ENCODE measurements at regions of chr7 and their contacts with region 1.

Region 1: GRCh38 chr7:116671681-116672595 is at the start of gene MET:
- DNase-seq: peak; percentile 82 to 98
- H3K4me3 ChIP-seq: peak within 1 kb of the TSS; percentile 98
- H3K27ac ChIP-seq: peak within 1 kb of the TSS; percentile 90
- H3K4me1 ChIP-seq: peaks cover 40% of the 10 kb centered on the region
- H3K27me3 ChIP-seq: no peaks in the 10 kb centered on the region
- CTCF ChIP-seq: peak; percentile 76
- total RNA-seq, gene MET: 237 and 287 TPM in 2 replicates

Region 2: DNA sequence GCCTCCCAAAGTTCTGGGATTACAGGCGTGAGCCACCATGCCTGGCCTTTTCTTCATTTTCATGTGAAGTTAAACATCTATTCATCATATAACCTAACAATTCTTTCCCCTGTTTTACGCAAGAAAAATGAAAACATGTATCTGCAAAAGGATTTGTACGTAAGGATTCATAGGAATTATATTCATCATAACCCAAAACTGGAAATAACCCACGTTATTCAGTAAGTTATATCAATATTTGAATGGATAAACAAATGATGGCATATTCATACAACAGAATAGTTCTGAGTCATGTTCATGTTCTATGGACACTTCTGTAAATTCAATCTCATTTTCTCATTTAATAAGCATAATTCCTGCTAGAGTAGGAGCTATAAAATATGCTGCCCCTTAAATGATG is 207.6 kb before region 1 on chr7:
- CTCF ChIA-PET with region 1: no interaction called
- POLR2A ChIA-PET with region 1: no interaction called
- intact Hi-C with region 1: no loop called
- DNase-seq: no peak
- H3K4me3 ChIP-seq: no peak overlapping the region
- H3K27ac ChIP-seq: no peak overlapping the region
- H3K4me1 ChIP-seq: peaks cover 27% of the 10 kb centered on the region
- H3K27me3 ChIP-seq: no peaks in the 10 kb centered on the region
- CTCF ChIP-seq: no peak

Region 3: GRCh38 chr7:116525913-116526861 is 145.8 kb before region 1 on chr7:
- CTCF ChIA-PET with region 1: no interaction called
- POLR2A ChIA-PET with region 1: interaction called, 4 read pairs
- intact Hi-C with region 1: loop called (anchors 2 kb)
- DNase-seq: peak; percentile 63 to 90
- H3K4me3 ChIP-seq: peak overlapping the region; percentile 97
- H3K27ac ChIP-seq: peak overlapping the region; percentile 92
- H3K4me1 ChIP-seq: peaks cover 64% of the 10 kb centered on the region
- H3K27me3 ChIP-seq: no peaks in the 10 kb centered on the region
- CTCF ChIP-seq: peak; percentile 56

Region 4: GRCh38 chr7:116706668-116707126 is 34.8 kb after region 1 on chr7:
- CTCF ChIA-PET with region 1: interaction called, 3 read pairs
- POLR2A ChIA-PET with region 1: interaction called, 5 read pairs
- intact Hi-C with region 1: loop called (anchors 1 kb)
- DNase-seq: peak; percentile 71 to 80
- H3K4me3 ChIP-seq: peak overlapping the region; percentile 43; the same call in 1 of the 2 replicates
- H3K27ac ChIP-seq: peak overlapping the region; percentile 82
- H3K4me1 ChIP-seq: peaks cover 67% of the 10 kb centered on the region
- H3K27me3 ChIP-seq: no peaks in the 10 kb centered on the region
- CTCF ChIP-seq: no peak

Region 5: DNA sequence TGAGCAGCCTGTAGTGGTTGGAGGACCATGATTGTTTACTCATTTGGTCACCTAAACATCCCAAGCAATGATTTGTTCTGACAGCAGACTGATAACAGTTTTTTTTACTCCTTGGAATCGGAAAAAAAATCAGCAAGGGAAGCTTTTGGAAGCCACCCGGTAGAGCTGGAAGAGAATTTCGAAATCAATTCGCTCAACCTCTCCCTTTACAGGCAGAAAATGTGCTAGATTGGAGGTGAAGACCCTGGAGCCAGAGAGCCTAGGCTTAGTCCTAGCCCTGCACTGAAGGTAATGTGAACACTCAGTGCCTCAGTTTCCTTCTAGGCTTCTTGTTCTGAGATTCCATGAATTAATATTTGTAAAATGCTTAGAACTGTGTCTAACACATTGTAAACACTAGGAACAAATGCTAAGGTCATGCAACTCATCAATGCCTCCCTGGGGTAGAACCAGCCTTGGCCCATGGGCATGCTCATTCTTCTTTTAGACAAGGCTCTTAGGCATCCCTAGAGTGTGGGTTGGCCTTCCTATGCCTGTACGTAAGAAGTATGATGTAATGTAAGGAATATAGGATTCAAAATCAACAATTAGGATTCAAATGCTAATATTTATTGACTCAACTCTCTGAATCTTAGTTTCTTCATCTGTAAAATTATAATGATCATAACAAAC is 52.8 kb after region 1 on chr7:
- CTCF ChIA-PET with region 1: no interaction called
- POLR2A ChIA-PET with region 1: no interaction called
- intact Hi-C with region 1: no loop called
- DNase-seq: no peak
- H3K4me3 ChIP-seq: no peak overlapping the region
- H3K27ac ChIP-seq: no peak overlapping the region
- H3K4me1 ChIP-seq: peaks cover 17% of the 10 kb centered on the region
- H3K27me3 ChIP-seq: no peaks in the 10 kb centered on the region
- CTCF ChIP-seq: no peak

Region 6: DNA sequence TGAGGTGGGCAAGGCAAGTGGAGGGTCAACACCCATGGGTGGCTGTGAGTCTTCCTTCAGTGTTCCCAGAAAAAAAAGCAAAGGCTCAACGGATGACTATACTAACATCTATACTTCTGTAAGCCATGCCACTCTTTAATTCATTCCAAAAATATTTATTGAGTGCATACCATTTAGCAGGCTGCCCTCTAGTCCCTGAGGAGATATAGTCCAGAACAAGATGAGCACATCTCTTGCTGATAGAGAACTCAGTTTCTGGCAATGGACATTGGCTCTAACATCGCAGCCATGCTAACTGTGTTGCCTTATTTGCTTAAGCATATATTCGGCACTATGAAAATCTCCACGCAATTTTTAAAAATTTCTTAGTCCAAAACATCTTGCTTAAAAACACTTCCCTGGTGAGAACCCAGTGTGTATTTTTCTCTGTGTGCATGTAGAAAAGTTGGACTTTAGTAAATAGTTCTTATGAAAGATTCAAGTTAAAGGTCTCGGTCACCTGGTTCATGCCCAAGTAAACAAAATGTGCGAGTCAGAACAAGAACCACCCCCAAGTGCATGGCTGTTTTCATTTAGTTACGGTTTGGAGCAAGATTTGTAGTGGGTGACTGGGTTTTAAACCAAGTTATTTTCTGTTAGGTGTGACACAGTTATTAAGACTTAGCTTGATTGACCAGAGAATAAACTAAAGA is 69.8 kb after region 1 on chr7:
- CTCF ChIA-PET with region 1: interaction called, 10 read pairs
- POLR2A ChIA-PET with region 1: no interaction called
- intact Hi-C with region 1: no loop called
- DNase-seq: no peak
- H3K4me3 ChIP-seq: no peak overlapping the region
- H3K27ac ChIP-seq: no peak overlapping the region
- H3K4me1 ChIP-seq: no peaks in the 10 kb centered on the region
- H3K27me3 ChIP-seq: no peaks in the 10 kb centered on the region
- CTCF ChIP-seq: no peak

Region 7: DNA sequence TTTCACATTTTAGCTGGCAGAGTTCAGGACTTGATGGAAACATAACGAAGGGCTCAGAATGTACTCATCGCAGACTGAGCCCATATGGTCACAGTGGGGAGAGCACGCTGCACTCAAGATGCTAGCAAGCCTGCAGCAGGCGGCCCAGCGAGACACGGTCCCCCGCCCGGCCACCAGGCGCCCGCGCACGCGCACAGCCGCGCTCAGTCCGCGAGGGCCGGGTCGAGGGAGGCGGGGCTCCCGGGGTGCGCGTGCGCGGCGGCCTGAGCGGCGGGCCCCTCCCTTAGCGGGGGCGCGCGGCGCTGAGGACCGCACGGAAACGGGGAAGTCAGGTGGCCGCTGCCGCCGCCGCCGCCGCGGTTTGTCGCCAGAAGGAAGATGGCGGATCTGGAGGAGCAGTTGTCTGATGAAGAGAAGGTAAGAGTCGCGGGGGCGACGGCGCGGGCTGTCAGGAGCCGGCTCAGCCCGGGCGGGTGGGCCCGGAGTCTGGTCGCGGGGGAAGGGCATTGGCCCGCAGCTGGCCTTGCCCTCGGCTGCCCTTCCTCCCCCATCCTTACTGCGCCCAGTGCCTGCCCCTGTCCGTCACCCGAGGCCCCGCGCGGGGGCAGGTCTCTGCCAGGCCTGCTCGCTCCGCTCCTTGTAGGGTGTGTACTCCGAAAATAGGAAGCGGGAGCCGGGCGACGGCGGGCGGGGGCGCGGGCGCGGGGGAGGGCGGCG is 190.5 kb after region 1 on chr7 and contains the start of gene CAPZA2:
- CTCF ChIA-PET with region 1: no interaction called
- POLR2A ChIA-PET with region 1: no interaction called
- intact Hi-C with region 1: loop called (anchors 2 kb)
- DNase-seq: peak; percentile 74 to 97
- H3K4me3 ChIP-seq: peak within 1 kb of the TSS; percentile 99
- H3K27ac ChIP-seq: peak within 1 kb of the TSS; percentile 53
- H3K4me1 ChIP-seq: peaks cover 37% of the 10 kb centered on the region
- H3K27me3 ChIP-seq: no peaks in the 10 kb centered on the region
- CTCF ChIP-seq: no peak
- total RNA-seq, gene CAPZA2: 171 and 203 TPM in 2 replicates

Region 8: DNA sequence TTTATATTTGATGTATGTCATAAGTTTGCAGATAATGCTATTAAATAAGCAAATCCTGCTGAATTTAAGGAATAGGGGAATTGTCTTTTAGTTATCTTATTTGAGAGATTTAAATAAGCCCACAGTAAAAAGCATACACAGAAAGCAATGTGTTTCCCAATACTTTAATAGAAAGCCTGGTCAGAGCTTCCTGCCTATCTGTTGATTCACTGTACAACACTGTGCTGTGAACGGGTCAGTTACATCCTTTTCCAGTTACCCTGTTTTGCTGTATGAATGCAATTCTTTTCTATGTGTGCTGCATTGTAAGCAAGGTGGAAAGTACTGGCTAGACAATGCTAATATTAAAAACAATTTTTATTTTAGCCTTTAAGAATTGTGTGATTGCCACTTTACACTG is 1633.7 kb after region 1 on chr7:
- CTCF ChIA-PET with region 1: no interaction called
- POLR2A ChIA-PET with region 1: interaction called, 12 read pairs
- intact Hi-C with region 1: no loop called
- DNase-seq: peak in 1 of 2 experiments; percentile 4
- H3K4me3 ChIP-seq: no peak overlapping the region
- H3K27ac ChIP-seq: no peak overlapping the region
- H3K4me1 ChIP-seq: no peaks in the 10 kb centered on the region
- H3K27me3 ChIP-seq: no peaks in the 10 kb centered on the region
- CTCF ChIP-seq: no peak